Activated B cell treated with CpG ODN at 0.5 μM for 24 hours (primary cell): ENCODE measurements at regions of chr11 and their contacts with region 1.

Region 1: DNA sequence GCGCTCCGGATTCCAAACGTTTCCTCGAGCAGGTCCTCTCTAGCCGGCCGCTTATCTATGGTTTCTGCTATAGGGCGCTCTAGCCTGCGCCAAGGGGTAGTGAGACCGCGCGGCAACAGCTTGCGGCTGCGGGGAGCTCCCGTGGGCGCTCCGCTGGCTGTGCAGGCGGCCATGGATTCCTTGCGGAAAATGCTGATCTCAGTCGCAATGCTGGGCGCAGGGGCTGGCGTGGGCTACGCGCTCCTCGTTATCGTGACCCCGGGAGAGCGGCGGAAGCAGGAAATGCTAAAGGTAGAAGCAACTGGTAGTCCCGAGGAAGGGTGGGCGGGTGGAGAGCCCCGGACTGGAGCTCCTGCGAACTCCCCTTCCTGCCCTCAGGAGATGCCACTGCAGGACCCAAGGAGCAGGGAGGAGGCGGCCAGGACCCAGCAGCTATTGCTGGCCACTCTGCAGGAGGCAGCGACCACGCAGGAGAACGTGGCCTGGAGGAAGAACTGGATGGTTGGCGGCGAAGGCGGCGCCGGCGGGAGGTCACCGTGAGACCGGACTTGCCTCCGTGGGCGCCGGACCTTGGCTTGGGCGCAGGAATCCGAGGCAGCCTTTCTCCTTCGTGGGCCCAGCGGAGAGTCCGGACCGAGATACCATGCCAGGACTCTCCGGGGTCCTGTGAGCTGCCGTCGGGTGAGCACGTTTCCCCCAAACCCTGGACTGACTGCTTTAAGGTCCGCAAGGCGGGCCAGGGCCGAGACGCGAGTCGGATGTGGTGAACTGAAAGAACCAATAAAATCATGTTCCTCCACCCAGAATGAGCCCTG is at the starts of genes LBHD1 and UQCC3:
- DNase-seq: peak; percentile 61
- ATAC-seq: peak; percentile 82
- H3K4me3 Mint-ChIP-seq: peak within 1 kb of the TSS; percentile 100
- H3K27ac Mint-ChIP-seq: peak within 1 kb of the TSS; percentile 98
- H3K4me1 Mint-ChIP-seq: peaks cover 62% of the 10 kb centered on the region
- H3K27me3 Mint-ChIP-seq: no peaks in the 10 kb centered on the region
- CTCF ChIP-seq: no peak
- total RNA-seq, gene LBHD1: 19.1 and 24.9 TPM in 2 replicates
- total RNA-seq, gene UQCC3: 8.3 and 9.4 TPM in 2 replicates

Region 2: DNA sequence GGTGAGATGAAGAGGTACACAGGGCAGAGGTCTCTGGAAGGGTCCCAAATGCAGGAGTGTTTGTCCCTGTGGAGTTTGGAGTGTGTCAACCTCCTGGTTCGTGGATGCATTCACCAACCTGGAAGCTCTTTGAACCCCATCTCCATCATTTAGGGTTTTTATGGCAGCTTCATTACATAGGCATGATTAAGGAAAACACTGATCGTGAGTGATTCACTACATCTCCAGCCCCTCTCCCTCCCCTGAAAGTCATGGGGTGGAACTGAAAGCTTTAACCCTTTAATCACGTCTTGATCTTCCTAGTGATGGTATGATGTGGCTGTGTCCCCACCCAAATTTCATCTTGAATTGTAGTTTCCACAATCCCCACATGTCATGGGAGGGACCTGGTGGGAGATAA is 567.8 kb before region 1 on chr11:
- CTCF ChIA-PET with region 1: no interaction called
- POLR2A ChIA-PET with region 1: no interaction called
- intact Hi-C with region 1: no loop called
- DNase-seq: no peak
- ATAC-seq: no peak
- H3K4me3 Mint-ChIP-seq: no peak overlapping the region
- H3K27ac Mint-ChIP-seq: no peak overlapping the region
- H3K4me1 Mint-ChIP-seq: peaks cover 5% of the 10 kb centered on the region
- H3K27me3 Mint-ChIP-seq: no peaks in the 10 kb centered on the region
- CTCF ChIP-seq: no peak

Region 3: GRCh38 chr11:62573592-62574362 is 98.0 kb before region 1 on chr11 and contains the start of gene EEF1G:
- CTCF ChIA-PET with region 1: no interaction called
- POLR2A ChIA-PET with region 1: interaction called, 11 read pairs
- intact Hi-C with region 1: no loop called
- DNase-seq: peak; percentile 92
- ATAC-seq: peak; percentile 94
- H3K4me3 Mint-ChIP-seq: peak within 1 kb of the TSS; percentile 97
- H3K27ac Mint-ChIP-seq: peak within 1 kb of the TSS; percentile 94
- H3K4me1 Mint-ChIP-seq: peaks cover 51% of the 10 kb centered on the region
- H3K27me3 Mint-ChIP-seq: no peaks in the 10 kb centered on the region
- CTCF ChIP-seq: no peak
- total RNA-seq, gene EEF1G: 2,373 and 2,524 TPM in 2 replicates

Region 4: GRCh38 chr11:62621567-62622470 is 50.0 kb before region 1 on chr11 and contains the start of gene B3GAT3:
- CTCF ChIA-PET with region 1: interaction called, 4 read pairs
- POLR2A ChIA-PET with region 1: interaction called, 20 read pairs
- intact Hi-C with region 1: no loop called
- DNase-seq: peak; percentile 93
- ATAC-seq: peak; percentile 92
- H3K4me3 Mint-ChIP-seq: peak within 1 kb of the TSS; percentile 90
- H3K27ac Mint-ChIP-seq: peak within 1 kb of the TSS; percentile 93
- H3K4me1 Mint-ChIP-seq: peaks cover 19% of the 10 kb centered on the region
- H3K27me3 Mint-ChIP-seq: no peaks in the 10 kb centered on the region
- CTCF ChIP-seq: no peak
- total RNA-seq, gene B3GAT3: 48.8 and 56.6 TPM in 2 replicates

Region 5: DNA sequence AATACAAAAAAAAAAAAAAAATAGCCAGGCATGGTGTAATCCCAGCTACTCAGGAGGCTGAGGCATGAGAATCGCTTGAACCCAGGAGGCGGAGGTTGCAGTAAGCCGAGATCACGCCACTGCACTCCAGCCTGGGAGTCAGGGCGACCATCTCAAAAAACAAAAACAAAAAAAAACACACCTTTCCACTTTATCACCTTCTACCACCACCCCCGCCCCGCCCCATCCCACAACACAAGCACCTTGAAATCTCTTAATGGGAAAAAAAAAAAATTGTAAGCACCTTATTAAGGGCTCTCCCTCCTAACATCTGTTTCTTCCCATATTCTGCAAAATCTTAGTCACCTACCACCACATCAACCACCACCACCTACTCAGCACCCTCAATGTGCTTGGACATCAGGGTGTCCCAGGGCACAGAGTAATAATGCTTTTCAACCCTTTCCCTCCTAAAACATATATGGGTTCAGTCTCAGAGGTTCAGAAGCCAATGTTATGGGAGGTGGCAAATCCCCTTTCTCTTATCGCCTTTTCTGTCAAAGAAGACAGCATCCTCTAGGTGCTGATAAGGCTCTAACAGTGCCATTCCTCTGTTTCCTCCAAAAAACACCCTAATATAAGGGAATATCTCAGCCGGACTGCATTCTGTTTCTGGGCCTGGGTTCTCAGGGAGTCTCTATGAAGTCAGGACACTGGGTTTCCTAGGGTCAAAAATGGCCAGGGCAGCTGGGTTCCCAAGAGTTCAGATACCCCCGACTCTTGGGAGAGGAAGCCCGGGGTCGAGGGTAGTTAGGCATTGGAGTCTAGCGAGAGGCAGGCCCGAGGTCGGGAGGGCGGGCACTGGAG is 19.4 kb before region 1 on chr11:
- CTCF ChIA-PET with region 1: interaction called, 3 read pairs
- POLR2A ChIA-PET with region 1: interaction called, 400 read pairs
- intact Hi-C with region 1: loop called (anchors 2 kb)
- DNase-seq: no peak
- ATAC-seq: no peak
- H3K4me3 Mint-ChIP-seq: peak overlapping the region; percentile 90
- H3K27ac Mint-ChIP-seq: peak overlapping the region; percentile 90
- H3K4me1 Mint-ChIP-seq: peaks cover 28% of the 10 kb centered on the region
- H3K27me3 Mint-ChIP-seq: no peaks in the 10 kb centered on the region
- CTCF ChIP-seq: no peak

Region 6: DNA sequence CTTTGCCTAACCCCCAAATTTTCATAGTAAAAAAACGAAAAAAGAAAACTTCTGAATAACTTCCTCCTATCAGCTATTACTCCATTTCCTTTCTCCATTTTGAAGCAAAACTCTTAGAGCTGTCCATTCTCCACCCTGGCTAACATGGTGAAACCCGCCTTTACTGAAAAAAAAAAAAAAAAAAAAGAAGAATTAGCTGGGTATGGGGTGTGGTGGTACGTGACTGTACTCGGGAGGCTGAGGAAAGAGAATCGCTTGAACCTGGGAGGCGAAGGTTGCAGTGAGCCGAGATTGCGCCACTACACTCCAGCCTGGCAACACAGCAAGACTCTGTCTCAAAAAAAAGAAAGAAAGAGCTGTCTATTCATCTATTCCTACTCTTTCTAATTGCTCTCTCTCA is 144.8 kb after region 1 on chr11:
- CTCF ChIA-PET with region 1: no interaction called
- POLR2A ChIA-PET with region 1: interaction called, 12 read pairs
- intact Hi-C with region 1: no loop called
- DNase-seq: no peak
- ATAC-seq: no peak
- H3K4me3 Mint-ChIP-seq: no peak overlapping the region
- H3K27ac Mint-ChIP-seq: no peak overlapping the region
- H3K4me1 Mint-ChIP-seq: no peaks in the 10 kb centered on the region
- H3K27me3 Mint-ChIP-seq: no peaks in the 10 kb centered on the region
- CTCF ChIP-seq: no peak